ENCODE measurements at regions of chr19 and their contacts with region 1.

Region 1: GRCh38 chr19:44770550-44771257 is 7.0 kb upstream of the CBLC start:
- DNase-seq: peak; percentile 90 to 92
- H3K4me3 ChIP-seq: no peak overlapping the region
- H3K27ac ChIP-seq: no peak overlapping the region
- H3K4me1 ChIP-seq: peaks cover 0 to 3% (median 0%) of the 10 kb centered on the region in 4 donors
- H3K27me3 ChIP-seq: peaks cover 0 to 12% of the 10 kb centered on the region in 2 donors
- CTCF ChIP-seq: peak; percentile 82 to 92

Region 2: GRCh38 chr19:44725251-44725650 is 45.5 kb before region 1 on chr19:
- intact Hi-C with region 1: loop called (anchors 1 kb)
- DNase-seq: peak in 1 of 2 donors; percentile 66
- H3K4me3 ChIP-seq: no peak overlapping the region
- H3K27ac ChIP-seq: no peak overlapping the region
- H3K4me1 ChIP-seq: peaks cover 0 to 24% (median 16%) of the 10 kb centered on the region in 4 donors
- H3K27me3 ChIP-seq: peaks cover 0 to 17% of the 10 kb centered on the region in 2 donors
- CTCF ChIP-seq: peak in 1 of 2 experiments; percentile 4

Measured in tibial artery (tissue), 4 donors.